G401 (cell line): ENCODE measurements at regions of chr22 and their contacts with region 1.

Region 1: DNA sequence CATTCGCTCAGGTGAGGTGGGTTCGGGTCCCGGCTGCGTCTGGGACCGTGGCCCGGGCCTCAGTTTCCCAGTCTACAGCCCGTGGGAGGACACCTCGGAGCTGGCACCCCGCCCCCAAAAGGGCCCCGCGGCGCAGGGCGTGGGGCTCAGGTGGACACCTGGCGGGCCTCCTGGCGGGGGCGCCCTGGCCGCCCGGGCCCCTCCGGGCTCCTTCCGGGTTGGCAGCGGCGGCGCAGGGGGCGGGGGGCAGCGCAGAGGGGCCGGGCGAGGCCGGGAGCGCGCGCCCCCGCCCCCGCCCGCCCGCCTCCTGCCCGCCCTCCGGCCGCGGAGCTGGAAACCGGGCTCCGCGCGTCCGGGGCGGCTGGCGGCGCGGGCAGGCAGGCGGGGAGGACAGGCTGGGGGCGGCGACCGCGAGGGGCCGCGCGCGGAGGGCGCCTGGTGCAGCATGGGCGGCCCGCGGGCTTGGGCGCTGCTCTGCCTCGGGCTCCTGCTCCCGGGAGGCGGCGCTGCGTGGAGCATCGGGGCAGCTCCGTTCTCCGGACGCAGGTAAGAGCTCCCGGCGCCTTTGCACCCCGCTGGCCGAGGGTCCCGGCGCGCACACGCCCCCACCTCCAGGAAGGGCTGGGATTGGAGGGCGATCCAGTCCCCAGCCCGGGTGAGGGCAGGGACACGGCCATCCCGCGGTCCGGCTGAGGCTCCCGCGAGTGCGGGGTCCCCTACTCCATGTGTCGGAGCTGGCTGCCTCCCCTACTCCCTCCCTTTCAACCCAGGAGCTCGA is at the start of gene EMID1:
- DNase-seq: no peak
- total RNA-seq, gene EMID1: 7.9 and 20.7 TPM in 2 replicates

Region 2: DNA sequence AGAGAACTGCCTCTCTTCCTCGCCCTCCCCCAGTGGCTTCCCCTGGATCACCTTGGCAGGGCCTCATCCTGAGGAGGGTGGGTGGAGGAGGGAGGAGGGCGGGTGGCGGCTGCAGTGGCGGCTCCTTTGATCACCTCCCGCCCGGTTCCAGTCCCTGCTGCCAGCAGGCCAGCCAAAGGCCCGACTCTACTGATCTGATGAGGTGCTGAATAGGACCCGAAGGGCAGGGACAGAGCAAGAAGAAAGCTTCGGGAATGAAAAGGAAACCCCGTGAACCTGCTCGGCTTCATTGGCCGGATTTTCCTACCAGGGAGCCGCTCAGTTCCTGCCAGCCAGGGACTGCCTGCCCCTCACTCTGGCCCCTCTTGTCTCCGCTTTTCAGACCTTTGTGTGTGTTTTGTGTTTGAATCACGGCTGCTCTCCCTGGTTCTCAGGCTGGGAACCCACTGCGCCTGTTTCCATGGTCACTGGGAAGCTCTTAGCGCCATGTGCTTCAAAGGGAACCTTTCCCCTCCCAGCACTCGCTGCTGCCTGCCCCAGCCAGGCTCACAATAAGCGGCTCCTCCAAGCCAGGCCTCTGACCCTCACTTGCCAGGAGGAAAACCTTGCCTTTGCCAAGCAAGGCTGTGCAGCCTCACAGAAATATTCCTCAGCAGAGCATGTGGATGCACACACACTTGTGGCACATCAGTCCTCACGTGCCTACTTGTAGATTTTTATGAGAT is 201.0 kb before region 1 on chr22:
- in situ Hi-C with region 1: loop called (anchors 5 kb)
- DNase-seq: peak; percentile 84